Caco-2 (cell line): ENCODE measurements at regions of chr5 and their contacts with region 1.

Region 1: GRCh38 chr5:157743163-157744050 is at the start of gene LSM11:
- DNase-seq: peak; percentile 87 to 94
- H3K4me3 ChIP-seq: peak within 1 kb of the TSS; percentile 91
- H3K4me3 Mint-ChIP-seq: peak within 1 kb of the TSS; percentile 83
- H3K27ac Mint-ChIP-seq: peak within 1 kb of the TSS; percentile 52
- H3K4me1 ChIP-seq: 0 out of 2 replicates have a peak, but pooled peaks cover 6% of the 10 kb centered on the region
- H3K4me1 Mint-ChIP-seq: peaks cover 8% of the 10 kb centered on the region
- H3K27me3 ChIP-seq: no peaks in the 10 kb centered on the region
- H3K27me3 Mint-ChIP-seq: no peaks in the 10 kb centered on the region
- CTCF ChIP-seq: peak; percentile 98 to 99
- total RNA-seq, gene LSM11: 6.8 and 7.7 TPM in 2 replicates

Region 2: DNA sequence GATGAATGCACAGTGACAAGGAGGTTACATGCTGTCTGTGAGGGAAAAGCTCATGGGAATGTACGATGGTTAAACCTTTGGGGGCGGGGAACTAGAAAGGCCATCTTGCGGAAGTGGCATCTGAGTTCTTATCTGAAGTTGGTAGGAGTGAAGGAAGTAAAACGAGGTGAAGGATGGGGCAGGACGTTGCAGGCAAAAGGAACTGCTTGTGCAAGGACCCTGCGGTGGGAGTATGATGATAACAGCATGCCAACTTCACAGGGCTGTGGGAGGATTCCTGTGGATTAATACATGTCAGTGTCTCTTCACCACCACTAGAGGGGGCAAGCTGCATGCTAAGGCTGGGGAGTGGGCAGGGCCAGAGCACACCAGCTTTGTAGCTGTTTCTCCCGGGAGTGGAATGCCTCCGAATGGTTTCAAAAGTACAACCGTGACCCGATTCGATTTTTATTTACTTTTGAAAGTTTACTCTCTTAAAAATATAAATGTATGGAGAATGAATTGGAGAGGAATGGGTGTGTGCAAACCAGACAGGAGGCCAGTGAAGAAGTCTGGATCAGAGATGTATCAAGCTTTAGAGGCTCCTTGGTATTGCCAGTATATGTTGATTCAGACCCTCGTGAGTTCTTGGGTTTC is 415.0 kb before region 1 on chr5:
- CTCF ChIA-PET with region 1: interaction called, 14 read pairs
- POLR2A ChIA-PET with region 1: no interaction called
- intact Hi-C with region 1: loop called (anchors 1 kb)
- DNase-seq: peak; percentile 68 to 78
- H3K4me3 ChIP-seq: 0 out of 2 replicates have a peak overlapping the region, but pooled peaks have one; percentile 10
- H3K4me3 Mint-ChIP-seq: peak overlapping the region; percentile 39
- H3K27ac Mint-ChIP-seq: no peak overlapping the region
- H3K4me1 ChIP-seq: peaks cover 30% of the 10 kb centered on the region
- H3K4me1 Mint-ChIP-seq: peaks cover 21% of the 10 kb centered on the region
- H3K27me3 ChIP-seq: no peaks in the 10 kb centered on the region
- H3K27me3 Mint-ChIP-seq: no peaks in the 10 kb centered on the region
- CTCF ChIP-seq: peak; percentile 86 to 94

Region 3: GRCh38 chr5:157431544-157432200 is 311.7 kb before region 1 on chr5:
- CTCF ChIA-PET with region 1: interaction called, 4 read pairs
- POLR2A ChIA-PET with region 1: no interaction called
- intact Hi-C with region 1: loop called (anchors 2 kb)
- DNase-seq: peak in 1 of 2 experiments; percentile 63
- H3K4me3 ChIP-seq: no peak overlapping the region
- H3K4me3 Mint-ChIP-seq: no peak overlapping the region
- H3K27ac Mint-ChIP-seq: no peak overlapping the region
- H3K4me1 ChIP-seq: no peaks in the 10 kb centered on the region
- H3K4me1 Mint-ChIP-seq: no peaks in the 10 kb centered on the region
- H3K27me3 ChIP-seq: no peaks in the 10 kb centered on the region
- H3K27me3 Mint-ChIP-seq: no peaks in the 10 kb centered on the region
- CTCF ChIP-seq: peak; percentile 56 to 60

Region 4: DNA sequence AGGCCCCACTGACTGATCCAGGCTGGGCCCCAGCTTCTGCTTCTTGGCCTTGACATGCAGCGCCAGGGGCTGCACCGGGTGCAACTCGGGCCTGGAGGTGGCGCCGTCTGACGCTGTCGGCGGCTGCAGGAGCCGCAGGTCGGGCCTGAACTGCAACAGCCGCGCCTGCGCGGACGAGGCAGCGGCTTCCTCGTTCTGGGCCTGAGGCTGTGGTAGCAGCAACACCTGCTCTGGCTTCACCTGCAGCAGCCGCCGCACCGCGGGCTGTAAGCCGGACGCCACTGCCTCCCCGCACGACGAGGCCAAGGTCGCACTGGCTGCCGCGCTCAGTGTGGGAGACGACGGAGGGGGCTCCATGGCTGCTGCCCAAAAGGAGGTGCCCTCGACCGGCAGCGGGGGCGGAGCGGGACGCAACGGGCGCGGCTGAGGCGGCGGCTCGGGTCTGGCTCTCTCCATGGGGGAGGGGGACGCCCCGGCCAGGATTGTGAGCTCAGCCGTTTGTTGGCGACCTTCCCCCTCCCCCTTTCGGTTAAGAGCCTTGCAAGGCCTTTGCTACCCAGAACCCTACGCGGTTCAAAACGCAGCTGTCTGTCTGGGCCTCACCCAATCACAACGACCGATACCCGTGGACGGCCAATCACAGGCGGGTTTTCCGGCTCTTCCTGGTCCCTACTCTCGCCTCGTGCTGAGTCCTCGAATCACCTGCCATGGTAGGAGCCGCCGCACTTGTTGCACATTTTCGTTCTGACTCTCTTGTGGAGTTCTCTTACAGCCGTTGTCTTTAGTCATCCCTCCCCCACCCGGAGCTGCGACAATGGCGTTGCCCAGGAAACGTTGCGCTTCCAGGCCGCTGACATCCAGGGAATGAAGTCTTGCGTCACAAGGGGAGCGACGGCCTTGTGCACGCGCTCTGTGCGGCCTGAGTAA is 91.5 kb before region 1 on chr5 and contains the start of gene SOX30:
- CTCF ChIA-PET with region 1: interaction called, 16 read pairs
- POLR2A ChIA-PET with region 1: interaction called, 7 read pairs
- intact Hi-C with region 1: loop called (anchors 1 kb)
- DNase-seq: peak; percentile 92 to 93
- H3K4me3 ChIP-seq: peak within 1 kb of the TSS; percentile 57
- H3K4me3 Mint-ChIP-seq: peak within 1 kb of the TSS; percentile 73
- H3K27ac Mint-ChIP-seq: peak within 1 kb of the TSS; percentile 90
- H3K4me1 ChIP-seq: peaks cover 7% of the 10 kb centered on the region
- H3K4me1 Mint-ChIP-seq: peaks cover 6% of the 10 kb centered on the region
- H3K27me3 ChIP-seq: no peaks in the 10 kb centered on the region
- H3K27me3 Mint-ChIP-seq: no peaks in the 10 kb centered on the region
- CTCF ChIP-seq: peak; percentile 22 to 62
- total RNA-seq, gene SOX30: 2.9 and 3.1 TPM in 2 replicates

Region 5: GRCh38 chr5:157731272-157732129 is 11.9 kb before region 1 on chr5 and contains the start of gene THG1L:
- CTCF ChIA-PET with region 1: interaction called, 24 read pairs
- POLR2A ChIA-PET with region 1: interaction called, 9 read pairs
- intact Hi-C with region 1: loop called (anchors 1 kb)
- DNase-seq: peak; percentile 98
- H3K4me3 ChIP-seq: peak within 1 kb of the TSS; percentile 84
- H3K4me3 Mint-ChIP-seq: peak within 1 kb of the TSS; percentile 100
- H3K27ac Mint-ChIP-seq: peak within 1 kb of the TSS; percentile 99
- H3K4me1 ChIP-seq: 0 out of 2 replicates have a peak, but pooled peaks cover 4% of the 10 kb centered on the region
- H3K4me1 Mint-ChIP-seq: peaks cover 10% of the 10 kb centered on the region
- H3K27me3 ChIP-seq: no peaks in the 10 kb centered on the region
- H3K27me3 Mint-ChIP-seq: no peaks in the 10 kb centered on the region
- CTCF ChIP-seq: no peak
- total RNA-seq, gene THG1L: 19.8 and 22.9 TPM in 2 replicates

Region 6: DNA sequence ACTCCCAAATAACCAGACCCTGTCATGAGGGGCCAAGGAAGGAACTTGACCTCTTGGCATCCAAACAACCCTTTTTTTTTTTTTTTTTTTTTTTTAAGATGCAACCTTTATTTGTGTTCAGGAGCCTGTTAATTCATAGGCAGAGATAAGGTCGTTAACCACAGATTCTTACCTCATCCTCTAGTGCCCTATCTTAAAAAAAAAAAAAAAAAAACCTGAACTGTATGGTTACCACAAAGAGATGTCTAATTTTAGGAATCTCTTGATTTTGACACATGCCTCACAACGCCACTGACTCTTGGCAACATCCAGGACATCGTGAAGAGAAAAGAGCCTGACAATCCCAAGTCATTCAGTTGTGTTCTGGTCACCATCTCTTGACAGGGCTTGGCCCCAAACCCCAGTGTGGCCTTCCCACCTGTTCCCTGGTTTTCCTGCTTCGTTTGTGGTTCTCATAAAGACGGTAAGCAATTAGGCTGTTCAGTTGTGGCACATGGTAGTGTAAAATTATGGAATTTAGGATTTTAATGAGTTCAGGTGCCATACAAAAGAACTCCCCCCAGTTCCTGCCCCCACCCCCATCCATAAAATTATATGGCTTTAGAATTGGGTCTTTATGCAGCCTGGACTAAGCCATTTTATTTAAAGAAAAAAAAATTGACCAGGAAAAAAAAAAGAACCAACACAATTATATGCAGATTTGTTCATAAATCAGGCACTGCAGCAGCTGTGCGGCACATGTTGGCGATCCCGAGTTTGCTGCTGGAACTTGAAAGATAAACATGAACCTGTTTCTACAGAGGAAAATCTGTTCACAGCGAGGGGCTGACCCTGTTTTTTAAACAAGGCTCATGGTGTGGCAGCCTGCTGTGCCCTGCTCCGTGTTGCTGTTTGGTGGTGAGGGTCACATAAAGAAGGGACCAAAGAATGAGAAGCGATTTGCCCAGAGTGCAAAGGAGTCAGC is 383.3 kb after region 1 on chr5:
- CTCF ChIA-PET with region 1: no interaction called
- POLR2A ChIA-PET with region 1: no interaction called
- intact Hi-C with region 1: no loop called
- DNase-seq: no peak
- H3K4me3 ChIP-seq: no peak overlapping the region
- H3K4me3 Mint-ChIP-seq: no peak overlapping the region
- H3K27ac Mint-ChIP-seq: no peak overlapping the region
- H3K4me1 ChIP-seq: no peaks in the 10 kb centered on the region
- H3K4me1 Mint-ChIP-seq: no peaks in the 10 kb centered on the region
- H3K27me3 ChIP-seq: peaks cover 3% of the 10 kb centered on the region; the same call in 1 of the 2 replicates
- H3K27me3 Mint-ChIP-seq: peaks cover 29% of the 10 kb centered on the region
- CTCF ChIP-seq: no peak